Right ventricle myocardium superior (tissue), 1 donor: ENCODE measurements at regions of chr2 and their contacts with region 1.

Region 1: DNA sequence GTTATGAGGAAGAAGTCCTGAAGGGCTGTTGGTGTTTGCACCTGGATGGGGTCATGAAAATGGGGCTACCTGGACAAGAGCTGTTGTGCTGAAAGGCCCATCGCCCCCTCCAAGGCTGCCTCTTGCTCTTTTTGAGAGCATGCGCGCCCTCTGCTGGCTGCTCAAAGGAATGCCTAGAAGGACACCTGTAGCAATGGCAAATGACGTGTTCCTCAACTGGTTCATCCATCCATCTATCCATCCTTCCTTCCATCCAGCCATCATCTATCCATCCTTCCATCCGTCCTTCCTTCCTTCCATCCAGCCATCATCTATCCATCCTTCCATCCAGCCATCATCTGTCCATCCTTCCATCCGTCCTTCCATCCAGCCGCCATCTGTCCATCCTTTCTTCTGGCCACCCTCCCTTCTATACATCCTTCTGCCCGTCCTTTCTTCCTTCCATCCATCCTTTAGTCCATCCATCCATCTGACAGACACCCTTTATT is 17.2 kb upstream of the RPL31 start:
- DNase-seq: peak; percentile 88
- ATAC-seq: peak; percentile 86

Region 2: GRCh38 chr2:100606726-100607343 is 378.1 kb before region 1 on chr2:
- intact Hi-C with region 1: loop called (anchors 5 kb)
- DNase-seq: no peak
- ATAC-seq: peak; percentile 54

Region 3: GRCh38 chr2:100692381-100692780 is 292.6 kb before region 1 on chr2:
- intact Hi-C with region 1: no loop called
- DNase-seq: no peak
- ATAC-seq: no peak

Region 4: DNA sequence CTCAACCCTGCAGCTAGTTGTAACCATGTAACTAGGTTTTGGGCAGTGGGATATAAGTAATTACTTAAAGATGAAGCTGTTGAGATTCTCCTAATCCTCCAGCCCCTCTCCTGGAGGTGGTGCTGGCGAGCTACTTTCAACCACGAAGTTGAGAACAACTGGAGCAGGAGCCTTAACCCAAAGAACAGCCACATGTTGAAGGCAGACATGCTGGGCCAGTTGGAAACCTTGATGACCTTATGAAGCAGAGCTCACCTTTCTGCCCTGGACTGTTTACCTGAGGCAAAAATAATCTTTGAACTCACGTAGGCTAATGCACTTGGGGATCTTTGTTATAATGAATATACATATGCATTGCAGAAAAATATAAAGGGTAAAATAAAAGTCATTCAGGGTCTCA is 254.6 kb before region 1 on chr2:
- intact Hi-C with region 1: loop called (anchors 2 kb)
- DNase-seq: peak; percentile 65
- ATAC-seq: peak; percentile 84

Region 5: DNA sequence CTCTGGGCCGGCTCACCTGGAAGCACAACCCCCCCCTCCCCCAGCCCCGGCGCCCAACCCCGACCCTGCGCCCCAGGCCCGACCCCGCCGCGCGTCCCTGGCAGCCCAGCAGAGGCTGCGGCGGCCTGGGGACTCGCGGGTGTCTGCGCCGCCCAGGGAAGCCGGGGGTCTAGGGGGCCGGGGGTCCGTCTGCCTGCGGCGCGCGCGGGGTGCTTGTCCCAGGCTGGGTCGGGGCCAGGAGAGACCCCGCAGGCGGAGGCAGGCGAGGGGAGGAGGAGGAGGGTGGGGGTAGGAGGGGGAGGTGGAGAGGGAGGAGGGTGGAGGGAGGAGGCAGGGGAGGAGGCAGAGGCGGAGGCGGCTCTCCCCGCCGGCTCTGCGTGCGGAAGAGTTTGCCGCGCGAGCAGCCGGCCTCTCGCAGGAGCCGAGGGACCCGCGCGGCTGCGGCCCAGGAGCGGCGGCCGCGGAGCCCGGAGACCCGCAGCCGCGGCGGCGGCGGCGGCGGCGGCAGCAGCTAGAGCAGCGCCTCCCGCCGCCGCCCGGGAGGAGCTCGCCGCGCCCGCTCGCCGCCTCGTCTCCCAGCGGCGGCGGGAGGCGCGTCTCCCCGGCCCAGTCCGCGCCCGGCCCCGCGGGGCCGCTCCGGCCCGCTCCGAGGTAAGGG is 165.0 kb before region 1 on chr2 and contains the start of gene NPAS2:
- intact Hi-C with region 1: loop called (anchors 10 kb)
- DNase-seq: peak; percentile 66
- ATAC-seq: peak; percentile 51
- total RNA-seq, gene NPAS2: 38.0 TPM

Region 6: DNA sequence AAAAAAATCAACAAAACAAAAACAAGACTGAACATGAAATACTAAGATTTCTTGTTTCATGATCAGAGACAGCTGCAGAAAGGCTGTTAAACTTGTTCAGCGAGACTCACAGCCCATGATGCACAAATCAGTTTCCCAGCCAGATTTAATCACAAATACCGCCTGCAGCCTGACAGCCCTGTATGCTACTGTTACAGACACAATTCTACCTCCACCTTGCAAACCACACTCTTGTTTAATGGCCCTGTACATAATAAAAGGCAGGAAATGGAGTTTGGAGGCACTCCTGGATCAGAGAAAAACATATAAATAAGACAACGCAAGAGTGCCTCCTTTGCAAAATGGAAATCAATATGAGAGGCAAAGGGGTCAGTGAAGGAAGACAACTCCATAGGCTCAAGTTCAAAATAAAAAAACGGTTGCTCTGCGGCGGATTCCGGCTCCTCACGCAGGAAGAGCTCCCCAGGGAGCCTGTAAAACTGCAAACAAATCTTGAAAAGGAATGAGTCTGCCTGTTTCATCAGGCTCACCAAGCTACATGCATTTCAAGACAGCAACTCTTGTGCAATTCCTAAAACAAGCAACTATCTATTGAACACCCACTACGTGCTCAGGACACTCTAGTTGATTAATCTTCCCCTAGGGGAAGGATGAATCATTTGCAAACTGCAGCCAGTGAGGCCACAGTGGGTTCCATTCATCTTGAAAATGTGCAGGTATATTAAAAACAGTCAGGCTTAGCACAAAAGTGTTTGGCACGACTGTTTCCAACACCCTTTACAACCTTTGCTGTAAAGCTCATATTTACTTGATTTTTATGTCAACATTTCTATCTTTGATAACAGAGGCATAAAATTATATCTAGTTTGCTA is 128.7 kb after region 1 on chr2:
- intact Hi-C with region 1: no loop called
- DNase-seq: no peak
- ATAC-seq: no peak